ENCODE measurements at regions of chr11 and their contacts with region 1.

Region 1: DNA sequence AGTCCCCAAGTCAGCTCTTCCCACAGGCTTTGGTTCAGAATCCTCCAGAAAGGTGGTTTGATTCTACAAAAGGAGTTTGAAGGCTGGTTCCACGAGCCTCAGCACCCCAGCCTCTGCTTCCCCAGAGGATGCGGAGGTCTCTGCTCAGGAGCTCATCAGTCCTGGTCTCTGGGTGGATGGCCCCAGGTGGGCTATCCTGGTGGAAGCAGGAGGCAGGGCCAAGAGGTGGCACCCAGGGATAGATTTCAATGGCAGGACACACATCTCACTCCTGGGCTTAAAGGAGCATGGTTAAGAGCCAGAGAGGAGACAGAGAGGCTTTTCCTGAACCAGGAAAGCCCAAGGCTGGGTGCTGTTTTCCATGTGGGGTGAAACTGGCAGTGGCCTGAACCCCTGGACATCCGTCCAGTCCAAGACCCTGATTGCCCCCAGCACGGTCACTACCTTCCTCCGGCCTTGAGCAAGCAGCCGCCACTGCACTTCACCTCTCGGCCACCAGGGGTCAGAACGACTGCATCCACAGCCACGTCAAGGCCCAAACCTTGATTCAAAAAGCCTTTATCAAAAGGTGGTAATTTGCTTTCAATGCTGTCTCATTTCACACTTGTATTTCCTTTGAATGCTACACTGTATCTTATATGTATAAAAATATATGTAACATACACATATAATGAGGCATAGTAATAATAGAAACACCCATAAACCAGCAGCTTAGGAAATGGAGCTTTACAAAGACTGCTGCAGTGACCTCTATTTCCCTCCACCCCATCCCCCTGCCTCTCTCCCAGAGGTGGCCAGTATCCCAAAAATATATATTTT is 19.3 kb upstream of the FXYD2 start:
- DNase-seq: peak; percentile 88
- H3K4me3 ChIP-seq: no peak overlapping the region
- H3K27ac ChIP-seq: peak overlapping the region in 1 of 4 donors; percentile 13
- H3K4me1 ChIP-seq: peaks cover 0 to 28% (median 18%) of the 10 kb centered on the region in 4 donors
- H3K27me3 ChIP-seq: no peaks in the 10 kb centered on the region
- CTCF ChIP-seq: peak; percentile 97 to 99 (median 98)
- EP300 ChIP-seq: no peak
- POLR2A ChIP-seq: no peak

Region 2: GRCh38 chr11:117907251-117907981 is 63.5 kb after region 1 on chr11:
- intact Hi-C with region 1: loop called (anchors 1 kb)
- DNase-seq: peak; percentile 92
- H3K4me3 ChIP-seq: peak overlapping the region in 1 of 4 donors; percentile 20
- H3K27ac ChIP-seq: peak overlapping the region in 2 of 4 donors; percentile 50
- H3K4me1 ChIP-seq: peaks cover 0 to 14% (median 10%) of the 10 kb centered on the region in 4 donors
- H3K27me3 ChIP-seq: no peaks in the 10 kb centered on the region
- CTCF ChIP-seq: no peak
- EP300 ChIP-seq: no peak
- POLR2A ChIP-seq: peak in 1 of 2 donors; percentile 23

Measured in sigmoid colon (tissue), 7 donors.